ENCODE measurements at regions of chr2 and their contacts with region 1.

Region 1: DNA sequence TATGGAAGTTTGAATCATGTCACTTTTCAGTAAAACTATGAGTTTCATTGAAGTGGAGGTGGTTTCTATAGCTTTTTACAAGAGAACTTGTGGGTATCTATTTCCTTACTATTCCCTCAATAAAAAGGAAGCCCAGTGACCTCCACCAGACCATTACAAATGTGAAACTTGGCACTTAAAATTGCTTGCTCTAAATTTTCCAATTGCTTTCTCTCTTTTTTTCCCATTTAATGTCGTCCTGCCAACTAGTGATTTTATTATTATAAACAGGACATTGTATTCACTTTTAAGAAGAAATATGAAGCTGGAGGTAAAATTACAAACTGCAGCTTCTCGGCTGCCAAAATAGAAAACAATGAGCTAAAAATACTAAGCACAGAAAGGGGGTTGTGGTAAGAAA is 208.2 kb upstream of the ALPP start:
- DNase-seq: no peak
- ATAC-seq: no peak
- H3K4me3 ChIP-seq: no peak overlapping the region
- H3K27ac ChIP-seq: no peak overlapping the region
- H3K4me1 ChIP-seq: no peaks in the 10 kb centered on the region
- H3K27me3 ChIP-seq: no peaks in the 10 kb centered on the region
- CTCF ChIP-seq: no peak
- POLR2A ChIP-seq: no peak
- RAD21 ChIP-seq: no peak

Region 2: DNA sequence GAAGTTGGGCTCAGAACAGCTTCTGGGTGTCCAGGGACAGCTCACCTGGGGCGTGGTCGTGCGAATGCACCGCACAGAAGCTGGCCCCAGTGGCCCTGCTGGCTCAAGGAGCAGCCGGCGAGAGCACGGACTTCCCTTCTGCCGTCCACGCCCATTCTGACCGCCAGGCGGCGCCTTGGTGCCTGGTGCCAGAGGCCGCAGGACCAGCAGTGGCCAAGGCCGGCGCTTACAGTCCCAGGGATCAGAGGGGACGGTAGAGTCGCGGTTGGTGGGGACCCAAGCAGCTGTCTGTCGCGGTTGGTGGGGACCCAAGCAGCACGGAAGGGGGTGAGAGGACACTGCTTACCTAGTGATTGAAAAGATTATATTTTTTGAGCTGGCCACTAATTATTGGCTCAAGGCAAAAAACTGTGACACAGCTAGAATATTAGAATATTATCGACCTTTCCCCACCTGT is 269.9 kb before region 1 on chr2:
- CTCF ChIA-PET with region 1: no interaction called
- POLR2A ChIA-PET with region 1: no interaction called
- dilution Hi-C with region 1: no loop called
- in situ Hi-C with region 1: no loop called
- intact Hi-C with region 1: no loop called
- DNase-seq: peak; percentile 55
- ATAC-seq: peak; percentile 100
- H3K4me3 ChIP-seq: no peak overlapping the region
- H3K27ac ChIP-seq: no peak overlapping the region
- H3K4me1 ChIP-seq: no peaks in the 10 kb centered on the region
- H3K27me3 ChIP-seq: peaks cover 16% of the 10 kb centered on the region; the same call in 1 of the 2 replicates
- CTCF ChIP-seq: peak; percentile 79
- POLR2A ChIP-seq: no peak
- RAD21 ChIP-seq: peak; percentile 57

Region 3: DNA sequence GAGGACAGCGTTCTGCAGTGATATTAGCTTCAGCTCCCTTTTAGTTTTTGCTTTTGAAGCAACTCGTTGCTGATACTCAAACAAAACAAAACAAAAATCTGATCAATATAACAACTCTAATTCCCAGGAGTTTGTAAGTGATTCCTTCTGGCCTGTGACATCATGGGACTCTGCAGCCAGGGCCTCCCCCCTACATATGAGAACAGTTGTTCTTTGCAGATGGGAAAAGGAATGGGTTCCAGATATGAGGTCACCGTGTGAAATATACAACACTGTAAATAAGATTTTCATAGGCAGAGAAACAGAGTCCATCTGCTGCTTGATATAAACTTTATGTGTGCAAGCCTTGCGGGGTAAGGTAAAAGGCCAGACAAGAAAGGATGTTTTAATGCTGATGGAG is 152.2 kb before region 1 on chr2:
- CTCF ChIA-PET with region 1: no interaction called
- POLR2A ChIA-PET with region 1: no interaction called
- dilution Hi-C with region 1: no loop called
- in situ Hi-C with region 1: no loop called
- intact Hi-C with region 1: no loop called
- DNase-seq: peak; percentile 55
- ATAC-seq: no peak
- H3K4me3 ChIP-seq: no peak overlapping the region
- H3K27ac ChIP-seq: no peak overlapping the region
- H3K4me1 ChIP-seq: peaks cover 3% of the 10 kb centered on the region; the same call in 1 of the 2 replicates
- H3K27me3 ChIP-seq: no peaks in the 10 kb centered on the region
- CTCF ChIP-seq: no peak
- POLR2A ChIP-seq: no peak
- RAD21 ChIP-seq: no peak

Region 4: DNA sequence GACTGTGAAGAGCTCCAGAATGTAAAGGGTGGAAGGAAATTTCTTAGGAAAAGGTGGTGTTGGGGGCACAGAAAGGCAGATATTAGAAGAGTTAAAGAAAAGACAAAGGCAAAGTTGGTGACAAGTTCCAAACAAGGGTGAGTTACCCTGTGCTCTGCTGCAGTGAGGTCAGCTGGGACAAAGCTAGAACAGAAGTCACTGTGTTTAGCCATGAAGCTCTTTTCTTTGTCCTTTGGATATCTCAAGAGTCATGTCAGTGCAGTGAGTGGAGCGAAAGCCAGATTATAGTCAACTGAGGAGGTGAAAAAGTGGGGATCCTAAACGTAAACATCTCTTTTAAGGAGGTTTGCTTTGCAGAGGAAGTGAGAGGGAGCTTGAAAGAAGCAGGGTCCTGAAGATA is 20.4 kb after region 1 on chr2:
- CTCF ChIA-PET with region 1: no interaction called
- POLR2A ChIA-PET with region 1: no interaction called
- dilution Hi-C with region 1: no loop called
- in situ Hi-C with region 1: no loop called
- intact Hi-C with region 1: loop called (anchors 1 kb)
- DNase-seq: no peak
- ATAC-seq: no peak
- H3K4me3 ChIP-seq: no peak overlapping the region
- H3K27ac ChIP-seq: no peak overlapping the region
- H3K4me1 ChIP-seq: no peaks in the 10 kb centered on the region
- H3K27me3 ChIP-seq: no peaks in the 10 kb centered on the region
- CTCF ChIP-seq: no peak
- POLR2A ChIP-seq: no peak
- RAD21 ChIP-seq: no peak